ENCODE measurements at regions of chr11 and their contacts with region 1.

Region 1: DNA sequence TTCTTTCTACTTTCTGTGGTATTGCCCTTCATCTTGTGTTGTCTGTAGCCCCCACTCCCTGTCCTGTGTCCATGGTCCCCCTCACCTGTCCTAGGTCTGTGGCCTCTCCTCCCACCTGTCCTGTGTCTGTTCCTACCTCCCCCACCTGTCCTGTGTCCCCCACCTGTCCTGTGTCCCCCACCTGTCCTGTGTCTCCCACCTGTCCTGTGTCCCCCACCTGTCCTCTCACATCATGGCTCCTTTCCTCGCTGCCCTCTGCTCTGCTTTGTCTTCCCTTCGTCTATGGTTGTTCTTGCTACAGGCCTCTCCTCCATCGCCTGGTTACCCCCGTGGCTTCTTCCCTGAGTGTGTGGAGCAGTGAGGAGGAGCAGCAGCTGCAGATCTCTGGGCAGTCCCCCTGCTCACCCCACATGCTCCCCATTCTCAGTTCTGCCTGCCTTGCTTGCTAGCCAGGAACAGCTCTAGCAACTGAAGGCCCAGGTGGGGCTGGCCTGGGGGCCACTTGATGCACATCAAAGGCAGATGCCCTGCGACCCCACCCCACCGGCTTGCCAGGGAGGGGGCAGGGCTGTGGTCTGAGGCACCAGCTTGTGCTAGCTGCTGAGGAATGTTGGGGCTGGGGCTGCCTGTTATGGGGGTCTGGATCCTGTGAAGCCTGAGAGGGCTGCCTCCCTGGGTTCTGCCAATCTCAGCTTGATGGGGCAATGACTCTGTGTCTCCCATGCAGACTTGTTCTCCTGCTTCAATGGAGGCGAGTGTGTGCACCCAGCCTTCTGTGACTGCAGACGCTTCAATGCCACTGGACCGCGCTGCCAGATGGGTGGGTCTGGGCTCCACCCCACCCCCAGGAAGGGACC is 5.6 kb downstream of the OTOG start:
- DNase-seq: no peak
- ATAC-seq: no peak
- H3K4me3 Mint-ChIP-seq: no peak overlapping the region
- H3K27ac Mint-ChIP-seq: no peak overlapping the region
- H3K4me1 Mint-ChIP-seq: peaks cover 13% of the 10 kb centered on the region
- H3K27me3 Mint-ChIP-seq: peaks cover 5% of the 10 kb centered on the region
- CTCF ChIP-seq: no peak

Region 2: GRCh38 chr11:17352950-17353820 is 199.4 kb before region 1 on chr11:
- CTCF ChIA-PET with region 1: no interaction called
- POLR2A ChIA-PET with region 1: no interaction called
- DNase-seq: peak; percentile 70
- ATAC-seq: peak; percentile 58
- H3K4me3 Mint-ChIP-seq: peak overlapping the region; percentile 82
- H3K27ac Mint-ChIP-seq: no peak overlapping the region
- H3K4me1 Mint-ChIP-seq: peaks cover 27% of the 10 kb centered on the region
- H3K27me3 Mint-ChIP-seq: peaks cover 73% of the 10 kb centered on the region
- CTCF ChIP-seq: no peak

Region 3: GRCh38 chr11:17445240-17445795 is 107.3 kb before region 1 on chr11:
- CTCF ChIA-PET with region 1: no interaction called
- POLR2A ChIA-PET with region 1: no interaction called
- DNase-seq: no peak
- ATAC-seq: no peak
- H3K4me3 Mint-ChIP-seq: no peak overlapping the region
- H3K27ac Mint-ChIP-seq: no peak overlapping the region
- H3K4me1 Mint-ChIP-seq: 0 out of 2 replicates have a peak, but pooled peaks cover 2% of the 10 kb centered on the region
- H3K27me3 Mint-ChIP-seq: peaks cover 27% of the 10 kb centered on the region
- CTCF ChIP-seq: no peak

Region 4: GRCh38 chr11:17563248-17563647 is 10.6 kb after region 1 on chr11:
- CTCF ChIA-PET with region 1: interaction called, 18 read pairs
- POLR2A ChIA-PET with region 1: interaction called, 3 read pairs
- DNase-seq: peak; percentile 25
- ATAC-seq: peak; percentile 92
- H3K4me3 Mint-ChIP-seq: no peak overlapping the region
- H3K27ac Mint-ChIP-seq: no peak overlapping the region
- H3K4me1 Mint-ChIP-seq: no peaks in the 10 kb centered on the region
- H3K27me3 Mint-ChIP-seq: no peaks in the 10 kb centered on the region
- CTCF ChIP-seq: no peak

Measured in WTC11 (cell line).